Activated T-helper 1 cell treated with anti-CD3 and anti-CD28 coated beads, Interleukin-12 subunit alpha, Interleukin-12 subunit beta, Interleukin-2, Interleukin-4 antibody, amounts not matched to agents 30 ng/mL and 10 ng/mL and 1 ng/mL, durations not matched to agents 14 hours and 24 hours and 36 hours (primary cell): ENCODE measurements at regions of chr9 and their contacts with region 1.

Region 1: DNA sequence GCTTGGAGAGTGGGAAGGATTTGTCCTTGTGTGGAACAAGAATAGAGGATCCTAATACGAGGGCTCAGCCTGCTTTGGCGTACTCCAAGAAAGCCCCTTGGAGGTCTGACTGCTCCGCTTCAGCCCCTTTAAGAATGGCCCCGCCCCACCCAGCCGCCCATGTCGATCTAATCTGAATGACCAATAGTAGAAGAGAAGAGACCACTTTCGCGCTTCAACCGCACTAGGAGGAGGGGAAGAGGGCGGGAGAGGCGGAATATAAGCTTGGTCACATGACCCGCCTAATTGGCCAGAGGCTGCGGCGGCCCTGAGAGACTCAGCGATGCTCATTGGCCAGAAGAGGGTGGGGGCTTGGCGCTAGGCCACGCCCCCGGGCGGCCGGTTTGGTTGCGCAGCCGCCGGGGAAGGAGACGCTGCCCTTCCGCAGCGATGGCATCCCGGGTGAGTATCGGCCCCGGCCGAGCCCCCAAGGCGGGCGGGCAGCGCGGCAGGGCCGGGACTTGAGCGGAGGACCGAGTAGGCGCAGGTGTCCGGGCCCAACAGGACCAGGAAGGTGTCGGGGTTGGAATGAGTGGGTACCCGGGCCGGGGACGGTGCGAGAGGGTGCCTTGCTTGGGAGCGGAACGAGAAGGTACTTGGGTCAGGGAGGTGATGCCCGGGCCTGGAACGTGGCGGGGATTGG is at the start of gene MIGA2:
- DNase-seq: peak; percentile 95
- H3K4me3 Mint-ChIP-seq: peak within 1 kb of the TSS; percentile 97
- H3K27ac Mint-ChIP-seq: peak within 1 kb of the TSS; percentile 79
- H3K4me1 Mint-ChIP-seq: peaks cover 20% of the 10 kb centered on the region
- H3K27me3 Mint-ChIP-seq: peaks cover 2% of the 10 kb centered on the region
- total RNA-seq, gene MIGA2: 43.4 and 43.8 TPM in 2 replicates

Region 2: GRCh38 chr9:129258124-129258822 is 221.9 kb after region 1 on chr9:
- intact Hi-C with region 1: loop called (anchors 2 kb)
- DNase-seq: peak; percentile 85
- H3K4me3 Mint-ChIP-seq: peak overlapping the region; percentile 60
- H3K27ac Mint-ChIP-seq: no peak overlapping the region
- H3K4me1 Mint-ChIP-seq: peaks cover 33% of the 10 kb centered on the region
- H3K27me3 Mint-ChIP-seq: peaks cover 23% of the 10 kb centered on the region